ENCODE measurements at regions of chr10 and their contacts with region 1.

Region 1: DNA sequence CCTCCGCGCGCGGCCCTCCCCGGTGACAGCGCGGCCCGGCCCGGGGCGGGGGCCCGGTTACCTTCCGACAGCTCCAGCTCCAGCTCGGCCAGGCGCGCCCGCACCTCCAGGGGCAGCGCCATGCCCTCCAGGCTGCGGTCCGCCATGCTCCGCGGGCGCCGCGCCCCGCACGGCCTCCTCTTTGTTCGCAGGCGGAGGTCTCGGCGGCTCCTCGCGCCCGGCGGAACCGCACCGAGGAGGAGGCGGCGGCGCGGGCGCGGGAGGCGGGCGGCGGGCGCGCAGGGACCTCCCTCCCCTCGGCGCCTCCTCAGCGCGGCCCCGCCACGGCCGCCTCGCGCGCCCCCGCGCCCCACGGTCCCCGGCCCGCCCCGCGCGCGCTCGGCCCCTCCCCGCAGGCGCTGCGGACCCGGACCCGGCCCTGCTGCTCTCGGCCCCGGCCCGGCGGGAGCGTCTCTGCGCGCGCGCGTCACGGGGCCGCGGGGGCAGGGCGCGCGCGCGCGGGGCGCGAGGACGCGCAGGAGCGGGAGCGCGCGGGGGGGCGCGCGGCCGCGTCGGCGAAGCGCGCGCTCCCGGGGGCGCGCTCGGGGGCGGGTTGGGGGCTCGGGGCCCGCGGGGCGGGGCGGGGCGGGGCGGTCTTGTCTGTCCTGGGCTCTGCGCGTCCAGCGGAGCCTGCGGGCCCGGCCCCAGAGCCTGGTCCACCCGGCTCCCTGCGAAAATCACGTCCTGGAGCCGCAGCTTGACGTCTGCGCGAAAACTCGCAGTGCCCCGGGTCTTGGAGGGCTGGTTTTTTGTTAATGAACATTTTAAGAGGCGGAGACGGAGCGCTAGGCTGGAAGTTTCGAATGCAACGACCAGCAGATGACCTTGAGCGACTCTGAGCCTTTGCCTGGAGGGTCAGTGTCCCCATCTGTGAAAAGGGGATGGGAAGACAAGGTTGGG is at the start of gene DIP2C:
- DNase-seq: peak; percentile 35 to 52
- ATAC-seq: peak; percentile 67 to 76
- H3K4me3 ChIP-seq: peak within 1 kb of the TSS; percentile 63 to 91 (median 80)
- H3K27ac ChIP-seq: peak within 1 kb of the TSS; percentile 80 to 88 (median 84)
- H3K4me1 ChIP-seq: peaks cover 1 to 16% of the 10 kb centered on the region in 2 donors
- H3K27me3 ChIP-seq: no peaks in the 10 kb centered on the region
- CTCF ChIP-seq: no peak
- POLR2A ChIP-seq: peak; percentile 67 to 73
- total RNA-seq, gene DIP2C: 19.1 to 60.0 (median 30.2) TPM

Region 2: DNA sequence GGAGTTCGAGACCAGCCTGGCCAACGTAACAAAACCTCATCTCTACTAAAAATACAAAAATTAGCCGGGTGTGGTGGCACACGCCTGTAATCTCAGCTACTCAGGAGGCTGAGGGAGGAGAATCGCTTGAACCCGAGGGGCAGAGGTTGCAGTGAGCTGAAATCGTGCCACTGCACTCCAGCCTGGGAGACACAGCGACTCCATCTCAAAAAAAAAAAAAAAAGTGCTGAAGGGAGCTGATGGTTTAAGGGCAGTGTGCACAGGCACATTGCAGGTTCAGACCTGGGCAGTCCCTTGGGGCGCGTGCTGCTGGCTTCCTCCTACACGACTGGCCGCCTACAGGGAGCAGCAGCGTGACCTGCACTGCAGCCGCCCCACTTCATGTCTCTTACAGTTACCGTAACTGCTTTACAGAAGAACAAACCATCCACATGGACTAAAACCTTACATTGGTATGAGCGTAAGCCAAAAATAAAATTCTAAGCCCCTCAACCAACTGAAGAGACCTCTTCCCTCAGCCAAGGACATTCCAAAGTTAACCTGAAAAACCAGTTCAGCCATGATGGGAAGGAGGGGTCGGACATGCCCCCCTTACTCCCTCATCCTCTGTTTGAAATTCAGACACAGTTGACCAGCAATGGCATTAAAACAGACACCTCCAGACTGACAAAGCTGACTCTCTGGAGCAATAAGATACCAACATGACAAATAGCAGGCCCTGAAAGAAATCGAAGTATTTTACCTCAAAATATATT is 292.2 kb before region 1 on chr10:
- in situ Hi-C with region 1: no loop called
- intact Hi-C with region 1: loop called (anchors 5 kb)
- DNase-seq: no peak
- ATAC-seq: no peak
- H3K4me3 ChIP-seq: no peak overlapping the region
- H3K27ac ChIP-seq: peak overlapping the region; percentile 66 to 81 (median 76)
- H3K4me1 ChIP-seq: peaks cover 19 to 22% of the 10 kb centered on the region in 2 donors
- H3K27me3 ChIP-seq: no peaks in the 10 kb centered on the region
- CTCF ChIP-seq: no peak
- POLR2A ChIP-seq: no peak

Region 3: GRCh38 chr10:511101-511848 is 178.4 kb before region 1 on chr10:
- in situ Hi-C with region 1: loop called in 3 of 4 experiments (anchors 25 kb)
- intact Hi-C with region 1: loop called (anchors 2 kb)
- DNase-seq: peak; percentile 92 to 95
- ATAC-seq: peak; percentile 90 to 91
- H3K4me3 ChIP-seq: peak overlapping the region in 2 of 4 donors; percentile 12 to 19
- H3K27ac ChIP-seq: peak overlapping the region; percentile 69 to 80 (median 78)
- H3K4me1 ChIP-seq: peaks cover 20 to 25% of the 10 kb centered on the region in 2 donors
- H3K27me3 ChIP-seq: no peaks in the 10 kb centered on the region
- CTCF ChIP-seq: peak; percentile 95 to 98 (median 97)
- POLR2A ChIP-seq: no peak

Region 4: GRCh38 chr10:615583-616152 is 74.0 kb before region 1 on chr10:
- in situ Hi-C with region 1: loop called in 1 of 4 experiments (anchors 10 kb)
- intact Hi-C with region 1: no loop called
- DNase-seq: no peak
- ATAC-seq: no peak
- H3K4me3 ChIP-seq: no peak overlapping the region
- H3K27ac ChIP-seq: no peak overlapping the region
- H3K4me1 ChIP-seq: peaks cover 62 to 76% of the 10 kb centered on the region in 2 donors
- H3K27me3 ChIP-seq: no peaks in the 10 kb centered on the region
- CTCF ChIP-seq: no peak
- POLR2A ChIP-seq: no peak

Region 5: GRCh38 chr10:784403-785088 is 94.8 kb after region 1 on chr10:
- in situ Hi-C with region 1: no loop called
- intact Hi-C with region 1: loop called (anchors 5 kb)
- DNase-seq: peak; percentile 43 to 61
- ATAC-seq: peak; percentile 63 to 76
- H3K4me3 ChIP-seq: peak overlapping the region; percentile 43 to 64 (median 54)
- H3K27ac ChIP-seq: peak overlapping the region in 1 of 4 donors; percentile 42
- H3K4me1 ChIP-seq: peaks cover 3 to 19% of the 10 kb centered on the region in 2 donors
- H3K27me3 ChIP-seq: no peaks in the 10 kb centered on the region
- CTCF ChIP-seq: no peak
- POLR2A ChIP-seq: no peak

Region 6: DNA sequence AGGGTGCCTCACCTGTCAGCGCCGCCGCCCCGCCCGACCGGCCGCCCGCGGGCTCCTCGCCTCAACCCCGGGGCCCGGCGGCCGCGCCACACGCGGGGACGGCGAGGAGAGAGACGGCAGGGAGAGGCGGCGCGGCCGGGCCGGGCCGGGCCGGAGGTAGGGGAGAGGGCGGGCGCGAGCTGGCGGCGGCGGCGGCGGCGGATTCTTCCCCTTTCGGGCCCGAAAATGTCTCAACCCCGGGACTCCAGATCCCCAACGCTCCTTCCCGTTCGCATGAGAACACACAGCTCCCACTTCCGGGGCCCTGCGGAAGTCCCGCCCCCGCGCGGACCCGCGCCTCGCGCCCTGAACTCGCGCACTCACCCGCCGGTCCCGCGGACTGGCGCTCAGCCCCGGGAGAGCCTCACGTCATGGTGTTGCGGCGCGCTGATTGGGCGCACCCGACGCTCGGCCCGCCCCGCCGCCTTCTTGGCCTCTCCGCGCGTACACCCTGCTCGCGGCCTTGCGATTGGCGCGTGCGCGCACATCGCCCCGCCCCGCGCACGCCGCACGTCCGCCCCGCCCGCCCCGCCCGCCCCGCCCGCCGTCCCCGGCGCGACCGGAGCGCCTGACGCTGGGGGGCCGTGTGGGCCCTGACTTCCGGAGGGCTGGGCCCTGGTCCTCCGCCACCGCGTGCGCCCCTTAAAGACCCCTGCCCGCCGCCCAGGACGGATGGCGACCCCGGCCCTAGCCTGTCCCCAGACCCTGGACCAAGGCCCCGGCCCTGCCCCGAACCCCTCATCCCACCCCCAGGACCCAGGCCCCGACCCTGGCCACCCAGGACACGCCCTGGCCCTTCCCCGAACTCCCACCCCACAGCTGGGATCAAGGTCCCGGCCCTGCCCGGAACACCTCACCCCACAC is 242.0 kb after region 1 on chr10 and contains the start of gene LARP4B:
- in situ Hi-C with region 1: no loop called
- intact Hi-C with region 1: loop called (anchors 5 kb)
- DNase-seq: peak; percentile 93 to 97
- ATAC-seq: peak; percentile 92 to 93
- H3K4me3 ChIP-seq: peak within 1 kb of the TSS; percentile 75 to 95 (median 82)
- H3K27ac ChIP-seq: peak within 1 kb of the TSS; percentile 96 to 100 (median 98)
- H3K4me1 ChIP-seq: peaks cover 37 to 45% of the 10 kb centered on the region in 2 donors
- H3K27me3 ChIP-seq: no peaks in the 10 kb centered on the region
- CTCF ChIP-seq: no peak
- POLR2A ChIP-seq: peak; percentile 88 to 90
- total RNA-seq, gene LARP4B: 29.7 to 45.6 (median 40.0) TPM